ENCODE measurements at regions of chr1 and their contacts with region 1.

Region 1: DNA sequence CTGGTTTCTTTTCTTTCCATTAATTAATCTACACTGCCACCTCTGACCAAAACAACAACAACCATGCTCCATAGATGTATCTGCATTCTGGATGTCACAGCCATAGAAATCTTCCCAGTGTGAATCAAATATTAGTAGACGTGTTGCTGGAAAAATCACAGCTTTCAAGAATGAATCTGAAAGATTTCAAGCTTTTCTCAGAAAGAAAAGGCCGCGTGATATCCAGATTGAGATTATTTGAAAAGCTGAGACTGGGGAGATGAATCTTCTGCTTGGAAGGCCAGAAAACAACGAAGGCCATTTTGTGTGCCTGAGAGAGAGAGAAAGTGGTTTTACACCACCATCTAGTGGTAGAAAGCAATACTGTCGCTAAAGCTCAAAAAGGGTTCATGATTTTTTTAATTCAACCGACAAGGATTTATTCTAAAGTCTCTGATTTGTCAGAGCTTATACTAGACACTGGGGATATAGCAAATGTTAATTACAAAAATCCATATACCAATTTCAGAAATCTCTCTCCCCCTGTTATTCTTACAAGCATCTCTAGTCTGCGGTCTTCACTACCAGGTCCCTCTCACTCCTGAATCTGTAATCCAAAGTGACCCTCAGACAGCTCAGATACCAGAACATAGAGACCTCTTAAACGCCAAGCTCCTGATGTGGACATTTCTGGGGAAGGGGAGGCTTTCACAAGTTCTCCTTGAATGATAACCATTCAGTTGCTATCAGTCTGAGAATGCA is 87.5 kb upstream of the SGIP1 start:
- DNase-seq: peak; percentile 31
- ATAC-seq: peak; percentile 66
- H3K4me3 Mint-ChIP-seq: peak overlapping the region; percentile 68
- H3K27ac Mint-ChIP-seq: peak overlapping the region; percentile 96
- H3K4me1 Mint-ChIP-seq: peaks cover 23% of the 10 kb centered on the region
- H3K27me3 Mint-ChIP-seq: peaks cover 9% of the 10 kb centered on the region
- CTCF ChIP-seq: peak; percentile 77

Region 2: GRCh38 chr1:65958561-65959350 is 487.7 kb before region 1 on chr1:
- CTCF ChIA-PET with region 1: interaction called, 37 read pairs
- POLR2A ChIA-PET with region 1: no interaction called
- intact Hi-C with region 1: loop called (anchors 2 kb)
- DNase-seq: peak; percentile 12
- ATAC-seq: peak; percentile 51
- H3K4me3 Mint-ChIP-seq: no peak overlapping the region
- H3K27ac Mint-ChIP-seq: no peak overlapping the region
- H3K4me1 Mint-ChIP-seq: no peaks in the 10 kb centered on the region
- H3K27me3 Mint-ChIP-seq: peaks cover 2% of the 10 kb centered on the region
- CTCF ChIP-seq: peak; percentile 78

Region 3: GRCh38 chr1:66197785-66198184 is 248.6 kb before region 1 on chr1:
- CTCF ChIA-PET with region 1: no interaction called
- POLR2A ChIA-PET with region 1: no interaction called
- intact Hi-C with region 1: no loop called
- DNase-seq: no peak
- ATAC-seq: no peak
- H3K4me3 Mint-ChIP-seq: no peak overlapping the region
- H3K27ac Mint-ChIP-seq: no peak overlapping the region
- H3K4me1 Mint-ChIP-seq: no peaks in the 10 kb centered on the region
- H3K27me3 Mint-ChIP-seq: no peaks in the 10 kb centered on the region
- CTCF ChIP-seq: no peak

Region 4: DNA sequence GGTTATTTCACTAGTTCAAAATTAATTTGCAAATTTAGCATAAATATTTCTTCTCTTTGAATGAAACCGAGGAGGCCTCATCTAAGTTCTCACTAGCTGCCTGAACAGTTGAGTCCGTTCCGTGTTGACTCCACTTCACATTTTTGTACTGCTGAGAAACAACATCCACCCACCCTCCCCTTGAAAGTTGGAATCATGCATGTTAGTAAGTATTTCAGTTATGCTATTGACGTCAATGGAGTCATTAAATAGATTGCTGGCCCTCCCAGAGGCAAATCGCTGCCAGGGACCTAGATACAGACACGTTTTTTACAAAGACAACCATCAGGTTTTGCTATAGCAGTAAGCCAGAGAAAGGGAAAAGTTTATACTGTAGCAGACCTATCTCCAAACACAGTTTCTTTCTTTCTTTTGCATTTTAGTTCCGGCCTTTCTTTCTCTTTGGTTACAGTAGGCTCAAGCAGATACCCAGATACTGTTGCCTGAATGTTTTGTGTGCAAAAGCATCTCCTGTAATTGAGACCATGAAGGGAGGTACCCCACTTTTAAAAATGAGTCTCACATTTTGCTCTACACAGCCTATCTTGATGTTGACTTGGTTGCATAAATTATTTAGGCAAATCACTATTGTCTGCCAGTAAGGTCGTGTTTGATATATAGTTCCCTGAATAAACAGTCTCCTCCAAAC is 175.1 kb before region 1 on chr1:
- CTCF ChIA-PET with region 1: interaction called, 14 read pairs
- POLR2A ChIA-PET with region 1: no interaction called
- intact Hi-C with region 1: no loop called
- DNase-seq: peak; percentile 80
- ATAC-seq: peak; percentile 63
- H3K4me3 Mint-ChIP-seq: no peak overlapping the region
- H3K27ac Mint-ChIP-seq: peak overlapping the region; percentile 86
- H3K4me1 Mint-ChIP-seq: peaks cover 65% of the 10 kb centered on the region
- H3K27me3 Mint-ChIP-seq: no peaks in the 10 kb centered on the region
- CTCF ChIP-seq: no peak

Region 5: DNA sequence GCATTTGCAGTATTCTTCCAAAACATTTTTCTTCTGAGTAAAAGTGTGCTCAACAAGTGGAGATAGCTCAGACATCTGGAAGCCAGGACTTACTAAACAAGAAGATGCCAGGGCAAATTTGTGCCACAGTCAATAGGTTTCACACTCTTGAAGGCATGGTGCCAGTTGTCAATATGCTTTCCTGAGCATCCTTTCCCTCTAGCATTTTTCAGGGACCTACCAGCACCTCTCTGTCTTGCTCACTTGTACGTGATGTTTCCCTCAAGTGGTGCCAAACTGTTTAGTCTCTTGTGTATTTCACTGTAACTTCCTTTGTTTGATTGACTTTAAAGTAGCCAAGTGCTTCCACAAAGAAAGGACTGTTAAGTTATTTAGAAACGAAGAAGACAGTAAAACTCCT is 106.5 kb before region 1 on chr1:
- CTCF ChIA-PET with region 1: interaction called, 38 read pairs
- POLR2A ChIA-PET with region 1: interaction called, 53 read pairs
- intact Hi-C with region 1: no loop called
- DNase-seq: no peak
- ATAC-seq: no peak
- H3K4me3 Mint-ChIP-seq: peak overlapping the region; percentile 68
- H3K27ac Mint-ChIP-seq: peak overlapping the region; percentile 89
- H3K4me1 Mint-ChIP-seq: peaks cover 70% of the 10 kb centered on the region
- H3K27me3 Mint-ChIP-seq: no peaks in the 10 kb centered on the region
- CTCF ChIP-seq: no peak

Region 6: DNA sequence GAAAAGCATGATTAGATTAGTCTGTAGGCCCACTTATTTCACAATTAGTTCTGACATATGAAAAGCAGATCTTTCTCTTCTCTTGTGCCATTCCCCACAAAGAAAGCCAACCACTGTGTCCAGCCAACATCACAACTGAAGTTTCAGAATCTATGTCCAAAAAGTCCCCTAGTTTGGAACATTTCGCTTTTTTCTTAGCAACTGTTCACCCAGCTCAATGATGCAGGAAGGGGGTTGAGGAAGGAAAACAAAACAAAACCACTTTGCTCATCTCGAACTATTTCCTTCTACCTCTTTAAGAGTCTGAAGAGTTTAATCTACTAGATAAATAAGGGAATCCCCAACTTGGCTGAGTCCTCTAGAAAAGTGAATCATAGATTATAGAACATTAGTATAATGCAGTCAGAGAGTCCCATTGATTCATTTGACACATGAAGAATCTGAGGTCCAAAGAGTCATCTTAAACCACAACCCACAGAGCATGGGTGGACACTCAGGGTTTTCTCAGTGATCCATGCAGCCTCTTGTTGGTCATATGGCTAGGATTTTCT is 71.8 kb before region 1 on chr1:
- CTCF ChIA-PET with region 1: interaction called, 101 read pairs
- POLR2A ChIA-PET with region 1: interaction called, 8 read pairs
- intact Hi-C with region 1: loop called (anchors 2 kb)
- DNase-seq: peak; percentile 76
- ATAC-seq: peak; percentile 75
- H3K4me3 Mint-ChIP-seq: peak overlapping the region; percentile 60
- H3K27ac Mint-ChIP-seq: peak overlapping the region; percentile 93
- H3K4me1 Mint-ChIP-seq: peaks cover 75% of the 10 kb centered on the region
- H3K27me3 Mint-ChIP-seq: no peaks in the 10 kb centered on the region
- CTCF ChIP-seq: no peak

Region 7: DNA sequence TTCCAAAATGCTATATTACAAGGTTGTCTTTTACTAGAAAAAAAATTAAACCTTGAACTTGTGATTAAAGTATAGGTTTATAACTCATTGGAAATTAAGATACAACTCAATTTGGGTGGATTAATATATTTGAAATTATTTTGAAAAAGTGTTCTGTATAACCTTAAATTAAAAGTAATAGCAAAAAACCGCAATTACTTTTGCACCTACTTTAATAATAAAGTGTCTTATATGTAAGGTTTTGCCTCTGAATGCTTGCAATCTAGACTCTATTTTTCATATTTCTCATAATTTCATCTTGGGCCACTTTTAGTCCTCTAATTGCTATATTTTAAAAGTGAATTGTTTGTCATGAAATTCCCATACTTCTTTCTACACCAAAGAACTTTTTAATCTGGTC is 217.3 kb after region 1 on chr1:
- CTCF ChIA-PET with region 1: no interaction called
- POLR2A ChIA-PET with region 1: no interaction called
- intact Hi-C with region 1: no loop called
- DNase-seq: no peak
- ATAC-seq: no peak
- H3K4me3 Mint-ChIP-seq: no peak overlapping the region
- H3K27ac Mint-ChIP-seq: no peak overlapping the region
- H3K4me1 Mint-ChIP-seq: no peaks in the 10 kb centered on the region
- H3K27me3 Mint-ChIP-seq: peaks cover 3% of the 10 kb centered on the region
- CTCF ChIP-seq: no peak